ENCODE measurements at regions of chr20 and their contacts with region 1.

Region 1: GRCh38 chr20:56411759-56412472 is at the start of gene CASS4:
- DNase-seq: peak in 7 of 9 donors; percentile 65 to 83 (median 73)
- ATAC-seq: peak; percentile 91
- H3K4me3 ChIP-seq: peak within 1 kb of the TSS; percentile 71
- H3K4me3 Mint-ChIP-seq: peak within 1 kb of the TSS; percentile 88 to 97 (median 92)
- H3K27ac ChIP-seq: peak within 1 kb of the TSS; percentile 78
- H3K27ac Mint-ChIP-seq: peak within 1 kb of the TSS; percentile 89 to 99 (median 97)
- H3K4me1 ChIP-seq: peaks cover 26 to 32% of the 10 kb centered on the region in 2 donors
- H3K4me1 Mint-ChIP-seq: peaks cover 32 to 64% (median 61%) of the 10 kb centered on the region in 7 donors
- H3K27me3 ChIP-seq: no peaks in the 10 kb centered on the region
- H3K27me3 Mint-ChIP-seq: no peaks in the 10 kb centered on the region
- total RNA-seq, gene CASS4: 8.0 to 16.9 (median 14.3) TPM

Region 2: GRCh38 chr20:56392282-56393137 is 19.4 kb before region 1 on chr20 and contains the start of gene CSTF1:
- CTCF ChIA-PET with region 1: interaction called, 5 read pairs
- POLR2A ChIA-PET with region 1: interaction called, 27 read pairs
- intact Hi-C with region 1: loop called (anchors 1 kb)
- DNase-seq: peak; percentile 98 to 99 (median 99)
- ATAC-seq: peak; percentile 92
- H3K4me3 ChIP-seq: peak within 1 kb of the TSS; percentile 92
- H3K4me3 Mint-ChIP-seq: no peak within 1 kb of the TSS
- H3K27ac ChIP-seq: peak within 1 kb of the TSS; percentile 83
- H3K27ac Mint-ChIP-seq: peak within 1 kb of the TSS in 1 of 9 donors; percentile 91
- H3K4me1 ChIP-seq: peaks cover 17 to 19% of the 10 kb centered on the region in 2 donors
- H3K4me1 Mint-ChIP-seq: peaks cover 8 to 51% (median 31%) of the 10 kb centered on the region in 7 donors
- H3K27me3 ChIP-seq: no peaks in the 10 kb centered on the region
- H3K27me3 Mint-ChIP-seq: no peaks in the 10 kb centered on the region
- total RNA-seq, gene CSTF1: 16.4 to 50.7 (median 46.7) TPM

Region 3: DNA sequence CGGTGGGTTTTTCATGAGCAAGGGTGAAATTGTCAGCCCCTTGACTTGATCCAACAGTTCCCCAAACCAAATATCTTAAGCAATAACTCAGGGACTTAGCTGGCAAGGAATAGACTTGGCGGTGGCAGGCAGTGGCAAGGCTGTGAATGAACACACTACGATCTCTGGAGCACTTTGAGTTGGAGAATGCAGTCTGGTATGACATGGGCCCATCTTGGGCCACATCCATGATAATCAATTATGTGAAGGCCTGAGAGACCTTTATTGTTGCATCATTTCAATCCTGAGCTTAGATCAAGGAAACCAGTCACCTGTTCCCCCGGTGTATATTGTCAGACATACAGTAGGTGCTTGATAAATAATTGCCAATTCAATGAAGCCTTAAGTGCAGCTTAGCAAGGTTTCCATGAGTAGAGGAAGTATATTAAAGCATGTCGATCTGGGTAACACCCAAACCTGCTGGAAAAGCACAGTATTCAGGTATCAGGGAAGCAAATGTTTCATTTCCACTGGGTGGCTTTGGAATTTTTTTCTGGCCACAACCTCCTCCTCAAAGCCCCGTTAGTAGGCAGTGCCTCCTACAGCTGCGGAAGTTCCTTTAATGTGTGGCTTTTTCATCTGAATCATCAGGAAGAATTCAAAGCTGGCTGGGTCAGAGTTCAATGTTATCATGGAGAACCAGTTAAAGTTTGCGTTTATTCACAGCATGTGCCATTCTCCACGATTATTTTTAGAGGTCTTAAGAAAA is 10.3 kb after region 1 on chr20:
- CTCF ChIA-PET with region 1: interaction called, 11 read pairs
- POLR2A ChIA-PET with region 1: interaction called, 67 read pairs
- intact Hi-C with region 1: loop called in 1 of 2 experiments (anchors 1 kb)
- DNase-seq: no peak
- ATAC-seq: no peak
- H3K4me3 ChIP-seq: no peak overlapping the region
- H3K4me3 Mint-ChIP-seq: peak overlapping the region; percentile 11 to 78 (median 58)
- H3K27ac ChIP-seq: peak overlapping the region; percentile 36
- H3K27ac Mint-ChIP-seq: peak overlapping the region; percentile 50 to 98 (median 92)
- H3K4me1 ChIP-seq: peaks cover 33 to 58% of the 10 kb centered on the region in 2 donors
- H3K4me1 Mint-ChIP-seq: peaks cover 41 to 84% (median 64%) of the 10 kb centered on the region in 7 donors
- H3K27me3 ChIP-seq: no peaks in the 10 kb centered on the region
- H3K27me3 Mint-ChIP-seq: no peaks in the 10 kb centered on the region

Region 4: GRCh38 chr20:56429502-56429901 is 17.6 kb after region 1 on chr20:
- CTCF ChIA-PET with region 1: interaction called, 3 read pairs
- POLR2A ChIA-PET with region 1: interaction called, 67 read pairs
- intact Hi-C with region 1: loop called in 1 of 2 experiments (anchors 2 kb)
- DNase-seq: peak in 1 of 9 donors; percentile 53
- ATAC-seq: no peak
- H3K4me3 ChIP-seq: peak overlapping the region; percentile 54
- H3K4me3 Mint-ChIP-seq: peak overlapping the region; percentile 77 to 96 (median 88)
- H3K27ac ChIP-seq: peak overlapping the region; percentile 76
- H3K27ac Mint-ChIP-seq: peak overlapping the region; percentile 84 to 99 (median 94)
- H3K4me1 ChIP-seq: peaks cover 22 to 26% of the 10 kb centered on the region in 2 donors
- H3K4me1 Mint-ChIP-seq: peaks cover 39 to 89% (median 75%) of the 10 kb centered on the region in 7 donors
- H3K27me3 ChIP-seq: no peaks in the 10 kb centered on the region
- H3K27me3 Mint-ChIP-seq: no peaks in the 10 kb centered on the region

Region 5: GRCh38 chr20:56439771-56440291 is 27.9 kb after region 1 on chr20:
- CTCF ChIA-PET with region 1: interaction called, 4 read pairs
- POLR2A ChIA-PET with region 1: interaction called, 24 read pairs
- intact Hi-C with region 1: loop called (anchors 1 kb)
- DNase-seq: no peak
- ATAC-seq: peak; percentile 21
- H3K4me3 ChIP-seq: no peak overlapping the region
- H3K4me3 Mint-ChIP-seq: peak overlapping the region in 9 of 10 donors; percentile 64 to 82 (median 74)
- H3K27ac ChIP-seq: peak overlapping the region; percentile 59
- H3K27ac Mint-ChIP-seq: peak overlapping the region; percentile 81 to 95 (median 91)
- H3K4me1 ChIP-seq: peaks cover 36 to 43% of the 10 kb centered on the region in 2 donors
- H3K4me1 Mint-ChIP-seq: peaks cover 29 to 70% (median 51%) of the 10 kb centered on the region in 7 donors
- H3K27me3 ChIP-seq: no peaks in the 10 kb centered on the region
- H3K27me3 Mint-ChIP-seq: no peaks in the 10 kb centered on the region

Region 6: DNA sequence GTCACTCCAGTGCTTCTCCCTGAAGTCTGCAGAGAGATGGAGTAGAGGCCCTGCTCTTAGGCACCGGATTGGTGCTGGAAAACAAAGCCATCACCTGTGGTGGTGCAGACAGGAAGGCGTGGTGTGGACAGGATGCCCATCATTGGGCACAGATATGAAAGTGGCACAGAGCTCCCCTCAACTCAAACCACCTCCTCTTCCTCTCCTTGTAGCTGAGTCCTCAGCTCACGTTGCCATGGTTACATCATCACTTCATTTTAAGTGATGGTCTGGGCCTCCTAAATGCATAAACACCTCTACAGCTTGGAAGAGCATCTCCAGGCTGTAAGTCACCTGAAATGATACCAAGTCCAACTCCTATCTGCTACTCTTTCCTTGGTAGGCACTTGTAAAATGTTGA is 48.5 kb after region 1 on chr20:
- CTCF ChIA-PET with region 1: interaction called, 3 read pairs
- POLR2A ChIA-PET with region 1: interaction called, 4 read pairs
- intact Hi-C with region 1: loop called in 1 of 2 experiments (anchors 1 kb)
- DNase-seq: peak in 6 of 9 donors; percentile 26 to 67 (median 56)
- ATAC-seq: peak; percentile 94
- H3K4me3 ChIP-seq: no peak overlapping the region
- H3K4me3 Mint-ChIP-seq: peak overlapping the region in 2 of 10 donors; percentile 38 to 44
- H3K27ac ChIP-seq: peak overlapping the region; percentile 62
- H3K27ac Mint-ChIP-seq: peak overlapping the region; percentile 34 to 92 (median 85)
- H3K4me1 ChIP-seq: peaks cover 9 to 38% of the 10 kb centered on the region in 2 donors
- H3K4me1 Mint-ChIP-seq: peaks cover 19 to 47% (median 33%) of the 10 kb centered on the region in 7 donors
- H3K27me3 ChIP-seq: no peaks in the 10 kb centered on the region
- H3K27me3 Mint-ChIP-seq: no peaks in the 10 kb centered on the region